Activated T-helper 1 cell treated with anti-CD3 and anti-CD28 coated beads, Interleukin-12 subunit alpha, Interleukin-12 subunit beta, Interleukin-2, Interleukin-4 antibody, amounts not matched to agents 30 ng/mL and 10 ng/mL and 1 ng/mL, durations not matched to agents 14 hours and 24 hours and 36 hours (primary cell): ENCODE measurements at regions of chr3 and their contacts with region 1.

Region 1: GRCh38 chr3:138915503-138916498 is 31.1 kb downstream of the FOXL2 start:
- DNase-seq: peak; percentile 68
- H3K4me3 Mint-ChIP-seq: peak overlapping the region; percentile 86
- H3K27ac Mint-ChIP-seq: peak overlapping the region; percentile 71
- H3K4me1 Mint-ChIP-seq: peaks cover 6% of the 10 kb centered on the region
- H3K27me3 Mint-ChIP-seq: peaks cover 16% of the 10 kb centered on the region

Region 2: DNA sequence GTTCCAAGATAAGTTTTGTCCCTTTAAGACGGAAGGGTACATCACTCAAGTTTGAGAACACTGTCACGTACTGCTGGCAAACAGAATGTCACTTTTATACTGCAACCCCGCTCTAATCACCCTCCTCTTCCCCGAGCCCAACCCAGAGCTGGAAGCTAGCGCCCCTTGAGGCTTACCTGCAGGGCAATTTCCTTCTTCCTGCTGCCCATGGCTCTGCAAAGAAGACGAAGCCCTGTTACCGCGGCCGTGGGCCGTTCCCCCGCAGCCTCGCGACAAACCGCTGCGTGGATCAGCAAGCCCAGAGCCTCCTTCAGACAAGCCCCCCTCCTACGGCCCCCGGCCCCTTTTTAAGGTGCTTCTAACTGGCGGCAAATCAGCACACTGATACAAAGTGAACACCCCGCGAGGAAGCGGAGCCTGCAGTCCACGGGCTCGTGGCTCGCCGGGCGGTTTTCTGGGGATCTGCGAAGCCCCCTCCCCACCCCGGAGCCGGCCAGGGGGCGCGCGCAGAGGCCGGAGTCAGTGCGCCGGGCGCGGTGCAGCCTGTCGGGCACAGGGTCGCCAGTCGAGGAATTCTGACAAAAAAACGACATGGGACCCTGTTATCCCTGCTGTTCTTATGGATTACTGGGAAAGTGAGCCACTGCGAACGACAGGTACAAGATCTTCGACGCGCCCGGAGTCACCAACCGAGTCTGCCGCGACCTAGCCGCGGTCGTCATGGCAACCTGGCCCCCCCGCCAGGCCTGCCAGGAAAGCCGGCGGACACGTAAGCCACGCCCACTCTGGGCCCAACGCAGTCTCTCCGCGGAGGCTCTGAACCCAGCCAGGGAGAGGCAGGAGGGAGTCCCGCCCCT is 586.4 kb before region 1 on chr3 and contains the start of gene NME9:
- intact Hi-C with region 1: loop called (anchors 5 kb)
- DNase-seq: peak; percentile 83
- H3K4me3 Mint-ChIP-seq: peak within 1 kb of the TSS; percentile 87
- H3K27ac Mint-ChIP-seq: peak within 1 kb of the TSS; percentile 68
- H3K4me1 Mint-ChIP-seq: peaks cover 33% of the 10 kb centered on the region
- H3K27me3 Mint-ChIP-seq: peaks cover 2% of the 10 kb centered on the region
- total RNA-seq, gene NME9: not detected in 2 replicates

Region 3: DNA sequence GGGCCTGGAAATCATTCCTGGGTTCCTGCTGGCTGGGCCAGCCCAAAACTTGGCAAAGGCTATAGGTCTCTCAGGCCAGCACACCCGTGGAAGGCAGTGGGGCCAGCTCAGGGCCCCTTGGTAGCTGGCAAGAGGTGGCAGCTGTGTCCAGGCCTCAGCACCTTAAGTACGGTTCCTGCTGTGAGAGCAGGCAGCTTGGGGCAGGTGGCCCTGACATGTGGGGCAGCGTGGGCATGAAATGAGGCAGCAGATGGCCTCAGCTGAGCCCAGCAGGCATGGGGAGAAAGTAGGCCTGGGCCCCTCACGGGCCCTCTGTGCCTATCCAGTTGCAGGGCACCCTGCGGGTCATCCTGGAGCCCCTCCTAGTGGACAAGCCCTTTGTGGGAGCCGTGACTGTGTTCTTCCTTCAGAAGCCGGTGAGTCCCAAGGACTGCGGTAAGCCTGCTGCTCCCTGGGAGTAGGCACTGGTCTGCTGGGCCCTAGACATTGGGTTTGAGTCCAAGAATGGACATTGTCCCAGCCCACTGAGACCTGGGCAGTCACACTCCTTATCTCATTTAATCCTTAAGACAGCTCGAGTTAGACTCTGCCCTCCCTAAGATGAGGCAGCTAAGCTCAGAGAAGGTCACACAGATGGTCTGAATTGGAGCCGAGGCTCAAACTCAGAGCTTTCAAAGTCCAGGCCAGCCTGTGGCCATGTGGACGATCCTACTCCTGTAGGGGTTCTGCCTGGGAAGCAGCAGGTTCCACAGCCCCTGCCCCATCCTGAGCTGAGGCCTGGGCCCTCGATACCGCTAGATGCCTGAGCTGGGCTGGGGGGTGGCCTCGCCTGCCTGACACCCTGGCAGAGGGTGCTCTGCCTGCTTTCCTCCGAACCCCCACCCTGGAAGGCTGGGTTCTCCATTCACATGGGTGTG is 455.9 kb before region 1 on chr3:
- intact Hi-C with region 1: loop called (anchors 5 kb)
- DNase-seq: no peak
- H3K4me3 Mint-ChIP-seq: no peak overlapping the region
- H3K27ac Mint-ChIP-seq: no peak overlapping the region
- H3K4me1 Mint-ChIP-seq: no peaks in the 10 kb centered on the region
- H3K27me3 Mint-ChIP-seq: peaks cover 3% of the 10 kb centered on the region

Region 4: GRCh38 chr3:138694287-138695007 is 221.4 kb before region 1 on chr3:
- intact Hi-C with region 1: loop called (anchors 1 kb)
- DNase-seq: no peak
- H3K4me3 Mint-ChIP-seq: no peak overlapping the region
- H3K27ac Mint-ChIP-seq: no peak overlapping the region
- H3K4me1 Mint-ChIP-seq: no peaks in the 10 kb centered on the region
- H3K27me3 Mint-ChIP-seq: no peaks in the 10 kb centered on the region